HEK293 (cell line): ENCODE measurements at regions of chr6 and their contacts with region 1.

Region 1: GRCh38 chr6:113994918-113995342 is 24.0 kb upstream of the HDAC2 start:
- H3K4me3 ChIP-seq: no peak overlapping the region
- H3K27ac ChIP-seq: no peak overlapping the region
- H3K4me1 ChIP-seq: peaks cover 7% of the 10 kb centered on the region; the same call in 1 of the 2 replicates
- CTCF ChIP-seq: peak; percentile 94

Region 2: GRCh38 chr6:113909234-113909856 is 85.6 kb before region 1 on chr6:
- CTCF ChIA-PET with region 1: no interaction called
- POLR2A ChIA-PET with region 1: no interaction called
- H3K4me3 ChIP-seq: no peak overlapping the region
- H3K27ac ChIP-seq: no peak overlapping the region
- H3K4me1 ChIP-seq: no peaks in the 10 kb centered on the region
- CTCF ChIP-seq: peak; percentile 16; the same call in 1 of the 2 replicates

Region 3: DNA sequence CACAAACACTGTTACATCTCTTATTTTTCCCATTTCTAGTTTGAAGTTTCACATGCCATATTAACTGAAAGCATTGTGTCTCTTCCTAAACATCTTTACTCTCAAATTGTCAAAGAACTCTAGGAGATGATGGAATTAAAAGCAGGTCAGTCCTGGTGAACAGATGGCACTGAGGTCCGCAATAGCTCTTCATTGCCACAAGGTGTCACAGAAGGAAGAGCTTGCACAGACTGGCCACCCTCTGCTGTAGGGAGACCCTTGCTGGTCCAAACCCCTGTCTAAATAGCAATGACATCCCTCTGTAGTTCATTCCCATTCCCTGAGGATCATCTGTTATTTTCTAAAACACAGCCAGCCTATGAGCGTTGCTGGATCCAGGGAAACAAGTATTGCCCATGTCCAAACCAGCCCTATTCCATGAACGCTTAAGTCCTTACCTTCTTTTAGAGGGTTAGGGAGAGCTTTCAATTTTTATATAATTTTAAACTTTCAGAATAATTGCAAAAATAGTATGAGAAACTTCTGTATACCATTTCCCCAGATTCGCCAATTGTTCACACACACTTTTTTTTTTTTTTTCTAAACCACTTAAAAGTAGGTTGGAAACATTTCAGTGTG is 13.9 kb before region 1 on chr6:
- CTCF ChIA-PET with region 1: interaction called, 52 read pairs
- POLR2A ChIA-PET with region 1: no interaction called
- H3K4me3 ChIP-seq: no peak overlapping the region
- H3K27ac ChIP-seq: no peak overlapping the region
- H3K4me1 ChIP-seq: no peaks in the 10 kb centered on the region
- CTCF ChIP-seq: no peak

Region 4: DNA sequence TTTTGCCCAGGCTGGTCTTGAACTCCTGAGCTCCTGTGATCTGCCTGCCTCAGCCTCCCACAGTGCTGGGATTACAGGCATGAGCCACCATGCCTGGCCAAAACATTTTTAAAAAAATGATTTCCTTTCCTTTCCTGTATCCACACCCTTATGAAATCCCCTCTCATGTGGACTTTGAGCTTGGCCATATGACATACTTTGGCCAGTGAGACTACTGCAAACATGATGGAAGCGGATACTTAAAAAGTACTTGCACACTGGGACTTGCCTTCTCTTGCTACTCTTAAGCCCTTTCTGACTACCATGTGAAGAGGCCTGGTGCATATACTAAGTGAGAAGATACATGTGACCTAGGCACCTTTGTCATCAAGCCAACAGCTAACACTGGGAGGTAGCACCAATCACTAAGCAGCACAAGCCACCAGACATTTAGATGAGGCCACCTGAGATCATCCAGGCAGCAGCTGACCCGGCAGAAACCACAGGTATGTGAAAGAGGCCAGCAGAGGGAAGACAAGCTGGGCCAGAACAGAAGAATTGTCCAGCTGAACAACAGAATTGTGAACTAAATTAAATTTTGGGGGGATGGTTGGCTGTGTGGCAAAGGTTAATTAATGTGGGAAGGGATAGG is 54.6 kb after region 1 on chr6:
- CTCF ChIA-PET with region 1: interaction called, 10 read pairs
- POLR2A ChIA-PET with region 1: no interaction called
- H3K4me3 ChIP-seq: no peak overlapping the region
- H3K27ac ChIP-seq: no peak overlapping the region
- H3K4me1 ChIP-seq: no peaks in the 10 kb centered on the region
- CTCF ChIP-seq: no peak

Region 5: GRCh38 chr6:114096561-114097172 is 101.7 kb after region 1 on chr6:
- CTCF ChIA-PET with region 1: interaction called, 17 read pairs
- POLR2A ChIA-PET with region 1: no interaction called
- H3K4me3 ChIP-seq: no peak overlapping the region
- H3K27ac ChIP-seq: no peak overlapping the region
- H3K4me1 ChIP-seq: no peaks in the 10 kb centered on the region
- CTCF ChIP-seq: no peak